Mammary epithelial cell (primary cell): ENCODE measurements at regions of chr2 and their contacts with region 1.

Region 1: GRCh38 chr2:45275242-45275805 is 266.1 kb upstream of the SIX2 start:
- DNase-seq: peak; percentile 73
- H3K4me3 ChIP-seq: no peak overlapping the region
- H3K27ac ChIP-seq: no peak overlapping the region
- H3K4me1 ChIP-seq: peaks cover 25% of the 10 kb centered on the region
- H3K27me3 ChIP-seq: no peaks in the 10 kb centered on the region
- CTCF ChIP-seq: no peak

Region 2: GRCh38 chr2:44844651-44845270 is 430.6 kb before region 1 on chr2:
- CTCF ChIA-PET with region 1: no interaction called
- dilution Hi-C with region 1: no loop called
- in situ Hi-C with region 1: no loop called
- intact Hi-C with region 1: no loop called
- DNase-seq: peak; percentile 17
- H3K4me3 ChIP-seq: no peak overlapping the region
- H3K27ac ChIP-seq: no peak overlapping the region
- H3K4me1 ChIP-seq: no peaks in the 10 kb centered on the region
- H3K27me3 ChIP-seq: peaks cover 4% of the 10 kb centered on the region
- CTCF ChIP-seq: no peak

Region 3: DNA sequence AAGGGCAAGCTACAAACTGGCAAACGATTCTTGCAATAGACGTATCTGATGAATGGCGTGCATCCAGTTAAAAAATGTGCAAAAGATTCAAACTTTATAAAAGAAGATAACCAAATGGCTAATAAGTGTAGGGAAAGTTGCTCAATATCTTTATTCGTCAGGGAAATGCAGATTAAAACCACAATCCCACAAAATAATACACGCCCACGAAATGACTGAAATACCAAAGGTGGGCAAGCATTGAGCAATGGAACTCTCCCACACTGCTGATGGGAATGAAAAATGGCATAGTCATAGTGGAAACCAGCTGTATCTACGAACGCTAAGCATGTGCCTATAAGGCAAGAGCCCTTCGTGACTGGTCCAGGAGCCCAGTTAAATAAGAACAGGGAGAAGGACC is 97.5 kb before region 1 on chr2:
- CTCF ChIA-PET with region 1: no interaction called
- dilution Hi-C with region 1: no loop called
- in situ Hi-C with region 1: no loop called
- intact Hi-C with region 1: loop called (anchors 5 kb)
- DNase-seq: peak; percentile 97
- H3K4me3 ChIP-seq: no peak overlapping the region
- H3K27ac ChIP-seq: peak overlapping the region; percentile 58
- H3K4me1 ChIP-seq: peaks cover 46% of the 10 kb centered on the region
- H3K27me3 ChIP-seq: no peaks in the 10 kb centered on the region
- CTCF ChIP-seq: no peak

Region 4: GRCh38 chr2:45307147-45307546 is 31.8 kb after region 1 on chr2:
- CTCF ChIA-PET with region 1: no interaction called
- dilution Hi-C with region 1: loop called (anchors 5 kb)
- in situ Hi-C with region 1: no loop called
- intact Hi-C with region 1: no loop called
- DNase-seq: no peak
- H3K4me3 ChIP-seq: no peak overlapping the region
- H3K27ac ChIP-seq: no peak overlapping the region
- H3K4me1 ChIP-seq: no peaks in the 10 kb centered on the region
- H3K27me3 ChIP-seq: no peaks in the 10 kb centered on the region
- CTCF ChIP-seq: no peak

Region 5: GRCh38 chr2:45353879-45354278 is 78.6 kb after region 1 on chr2:
- CTCF ChIA-PET with region 1: no interaction called
- dilution Hi-C with region 1: loop called (anchors 5 kb)
- in situ Hi-C with region 1: no loop called
- intact Hi-C with region 1: no loop called
- DNase-seq: peak; percentile 69
- H3K4me3 ChIP-seq: no peak overlapping the region
- H3K27ac ChIP-seq: no peak overlapping the region
- H3K4me1 ChIP-seq: peaks cover 5% of the 10 kb centered on the region
- H3K27me3 ChIP-seq: no peaks in the 10 kb centered on the region
- CTCF ChIP-seq: no peak

Region 6: GRCh38 chr2:45554073-45554741 is 278.9 kb after region 1 on chr2:
- CTCF ChIA-PET with region 1: no interaction called
- dilution Hi-C with region 1: no loop called
- in situ Hi-C with region 1: no loop called
- intact Hi-C with region 1: no loop called
- DNase-seq: peak; percentile 17
- H3K4me3 ChIP-seq: no peak overlapping the region
- H3K27ac ChIP-seq: no peak overlapping the region
- H3K4me1 ChIP-seq: no peaks in the 10 kb centered on the region
- H3K27me3 ChIP-seq: no peaks in the 10 kb centered on the region
- CTCF ChIP-seq: no peak